Calu3 (cell line): ENCODE measurements at regions of chr2 and their contacts with region 1.

Region 1: GRCh38 chr2:220417503-220417902 is 790.1 kb downstream of the SLC4A3 start:
- DNase-seq: no peak
- H3K4me3 Mint-ChIP-seq: no peak overlapping the region
- H3K27ac Mint-ChIP-seq: no peak overlapping the region
- H3K4me1 Mint-ChIP-seq: peaks cover 13% of the 10 kb centered on the region
- H3K27me3 Mint-ChIP-seq: no peaks in the 10 kb centered on the region
- CTCF ChIP-seq: no peak

Region 2: DNA sequence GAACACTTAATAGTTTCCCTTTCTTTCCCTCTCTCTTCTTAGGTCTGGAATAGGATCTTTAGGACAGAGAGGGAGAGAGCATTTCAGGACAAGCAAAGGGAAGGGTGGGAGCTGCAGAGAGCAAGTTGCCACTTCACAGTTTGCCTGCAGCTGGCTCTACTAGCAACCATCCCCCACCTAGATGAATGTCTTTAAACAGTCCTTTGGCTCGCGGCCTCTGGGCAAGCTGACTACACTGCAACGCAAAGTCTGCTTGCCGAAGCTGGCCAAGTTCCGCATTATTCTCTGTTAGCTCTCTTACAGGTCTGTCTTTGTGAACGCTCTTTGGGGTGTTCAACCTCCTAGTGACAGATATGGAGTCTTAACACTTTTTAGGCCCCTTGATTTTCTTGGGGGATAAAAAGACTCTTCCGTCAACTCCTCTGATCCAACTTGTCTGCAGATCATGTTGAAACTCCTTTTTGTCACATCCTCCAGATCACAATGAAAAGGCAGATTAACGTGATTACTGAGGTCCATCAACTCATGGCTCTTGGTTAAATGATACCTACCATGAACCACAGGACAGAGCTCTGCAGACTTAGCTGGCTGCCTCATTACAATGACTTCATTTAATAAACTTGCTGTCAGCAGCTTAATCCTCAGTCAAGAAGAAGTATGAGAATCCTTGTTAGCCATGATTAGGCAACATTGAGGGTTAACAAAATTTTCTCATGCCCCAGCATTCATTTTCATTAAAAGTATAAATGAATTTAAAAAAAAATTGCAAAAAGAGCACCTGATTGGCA is 715.5 kb before region 1 on chr2:
- CTCF ChIA-PET with region 1: no interaction called
- intact Hi-C with region 1: no loop called
- DNase-seq: no peak
- H3K4me3 Mint-ChIP-seq: no peak overlapping the region
- H3K27ac Mint-ChIP-seq: no peak overlapping the region
- H3K4me1 Mint-ChIP-seq: peaks cover 11% of the 10 kb centered on the region
- H3K27me3 Mint-ChIP-seq: peaks cover 8% of the 10 kb centered on the region
- CTCF ChIP-seq: no peak

Region 3: DNA sequence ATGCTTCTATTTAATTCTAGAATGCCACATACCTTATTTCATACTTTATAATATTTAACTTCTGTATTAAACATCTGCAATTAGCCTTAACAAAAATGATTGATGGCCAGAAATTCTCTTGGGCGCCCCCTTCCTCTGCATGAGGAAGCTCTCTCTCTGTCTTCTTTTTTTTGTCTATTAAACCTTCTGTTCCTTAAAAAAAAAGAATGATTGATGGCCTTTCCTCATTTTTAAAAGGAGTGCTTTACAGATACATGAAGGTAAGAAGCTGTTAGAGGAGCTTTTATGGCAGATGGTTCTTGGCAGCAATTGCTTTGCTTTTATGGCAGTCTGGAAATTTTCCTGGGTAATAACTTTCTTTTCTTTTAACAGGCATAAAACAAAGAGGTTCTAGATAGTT is 263.2 kb before region 1 on chr2:
- CTCF ChIA-PET with region 1: no interaction called
- intact Hi-C with region 1: no loop called
- DNase-seq: no peak
- H3K4me3 Mint-ChIP-seq: no peak overlapping the region
- H3K27ac Mint-ChIP-seq: no peak overlapping the region
- H3K4me1 Mint-ChIP-seq: peaks cover 9% of the 10 kb centered on the region
- H3K27me3 Mint-ChIP-seq: no peaks in the 10 kb centered on the region
- CTCF ChIP-seq: no peak

Region 4: GRCh38 chr2:220277445-220278007 is 140.0 kb before region 1 on chr2:
- CTCF ChIA-PET with region 1: no interaction called
- intact Hi-C with region 1: loop called (anchors 5 kb)
- DNase-seq: peak; percentile 52
- H3K4me3 Mint-ChIP-seq: no peak overlapping the region
- H3K27ac Mint-ChIP-seq: peak overlapping the region; percentile 64
- H3K4me1 Mint-ChIP-seq: peaks cover 57% of the 10 kb centered on the region
- H3K27me3 Mint-ChIP-seq: no peaks in the 10 kb centered on the region
- CTCF ChIP-seq: no peak